B cell (primary cell): ENCODE measurements at regions of chr6 and their contacts with region 1.

Region 1: GRCh38 chr6:14545496-14545895 is 427.9 kb downstream of the CD83 start:
- DNase-seq: no peak
- ATAC-seq: no peak
- H3K4me3 ChIP-seq: no peak overlapping the region
- H3K4me3 Mint-ChIP-seq: no peak overlapping the region
- H3K27ac ChIP-seq: no peak overlapping the region
- H3K27ac Mint-ChIP-seq: no peak overlapping the region
- H3K4me1 ChIP-seq: peaks cover 19 to 22% of the 10 kb centered on the region in 2 donors
- H3K4me1 Mint-ChIP-seq: peaks cover 35% of the 10 kb centered on the region
- H3K27me3 ChIP-seq: no peaks in the 10 kb centered on the region
- H3K27me3 Mint-ChIP-seq: no peaks in the 10 kb centered on the region
- CTCF ChIP-seq: no peak

Region 2: GRCh38 chr6:16001158-16001557 is 1455.7 kb after region 1 on chr6:
- CTCF ChIA-PET with region 1: no interaction called
- POLR2A ChIA-PET with region 1: interaction called, 13 read pairs
- intact Hi-C with region 1: no loop called
- DNase-seq: no peak
- ATAC-seq: no peak
- H3K4me3 ChIP-seq: no peak overlapping the region
- H3K4me3 Mint-ChIP-seq: no peak overlapping the region
- H3K27ac ChIP-seq: no peak overlapping the region
- H3K27ac Mint-ChIP-seq: no peak overlapping the region
- H3K4me1 ChIP-seq: no peaks in the 10 kb centered on the region
- H3K4me1 Mint-ChIP-seq: no peaks in the 10 kb centered on the region
- H3K27me3 ChIP-seq: no peaks in the 10 kb centered on the region
- H3K27me3 Mint-ChIP-seq: peaks cover 7% of the 10 kb centered on the region
- CTCF ChIP-seq: no peak